B cell (primary cell): ENCODE measurements at regions of chr12 and their contacts with region 1.

Region 1: GRCh38 chr12:54701940-54702592 is 53.9 kb upstream of the DCD start:
- DNase-seq: peak; percentile 58
- ATAC-seq: no peak
- H3K4me3 ChIP-seq: no peak overlapping the region
- H3K4me3 Mint-ChIP-seq: no peak overlapping the region
- H3K27ac ChIP-seq: no peak overlapping the region
- H3K27ac Mint-ChIP-seq: no peak overlapping the region
- H3K4me1 ChIP-seq: no peaks in the 10 kb centered on the region
- H3K4me1 Mint-ChIP-seq: no peaks in the 10 kb centered on the region
- H3K27me3 ChIP-seq: no peaks in the 10 kb centered on the region
- H3K27me3 Mint-ChIP-seq: peaks cover 19% of the 10 kb centered on the region
- CTCF ChIP-seq: peak; percentile 78

Region 2: DNA sequence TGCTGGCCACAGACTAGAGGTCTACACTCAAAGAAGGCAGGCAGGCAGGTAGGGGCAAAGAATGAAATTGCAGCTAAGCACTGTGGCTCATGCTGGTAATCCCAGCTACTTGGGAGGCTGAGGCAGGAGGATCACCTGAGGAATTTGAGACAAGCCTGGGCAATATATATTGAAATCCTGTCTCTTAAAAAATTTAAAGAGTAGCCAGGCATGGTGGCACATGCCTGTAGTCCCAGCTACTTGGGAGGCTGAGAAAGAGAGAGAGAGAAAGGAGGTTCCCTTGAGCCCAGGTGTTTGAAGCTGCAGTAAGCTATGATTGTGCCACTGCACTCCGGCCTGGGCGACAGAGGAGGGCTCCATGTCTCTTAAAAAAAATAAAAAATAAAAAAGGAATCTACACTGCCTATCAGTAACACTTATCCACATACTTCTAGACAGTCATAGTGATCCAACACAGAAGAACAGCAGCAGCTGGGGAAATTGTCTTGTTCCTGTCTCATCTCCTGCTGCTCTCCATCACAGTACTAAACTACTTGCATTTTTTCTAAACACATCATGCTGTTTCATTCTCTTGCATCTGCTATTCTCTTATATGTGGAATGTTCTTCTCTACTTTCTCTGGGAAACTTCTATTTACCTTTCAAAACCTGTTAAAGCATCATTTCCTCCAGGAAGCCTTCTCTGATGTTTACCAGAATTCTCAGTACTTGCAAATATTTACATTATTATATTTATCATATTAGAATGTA is 1133.1 kb before region 1 on chr12:
- CTCF ChIA-PET with region 1: no interaction called
- POLR2A ChIA-PET with region 1: no interaction called
- intact Hi-C with region 1: no loop called
- DNase-seq: no peak
- ATAC-seq: no peak
- H3K4me3 ChIP-seq: no peak overlapping the region
- H3K4me3 Mint-ChIP-seq: no peak overlapping the region
- H3K27ac ChIP-seq: no peak overlapping the region
- H3K27ac Mint-ChIP-seq: no peak overlapping the region
- H3K4me1 ChIP-seq: peaks cover 7 to 11% of the 10 kb centered on the region in 2 donors
- H3K4me1 Mint-ChIP-seq: peaks cover 18% of the 10 kb centered on the region
- H3K27me3 ChIP-seq: no peaks in the 10 kb centered on the region
- H3K27me3 Mint-ChIP-seq: no peaks in the 10 kb centered on the region
- CTCF ChIP-seq: no peak

Region 3: DNA sequence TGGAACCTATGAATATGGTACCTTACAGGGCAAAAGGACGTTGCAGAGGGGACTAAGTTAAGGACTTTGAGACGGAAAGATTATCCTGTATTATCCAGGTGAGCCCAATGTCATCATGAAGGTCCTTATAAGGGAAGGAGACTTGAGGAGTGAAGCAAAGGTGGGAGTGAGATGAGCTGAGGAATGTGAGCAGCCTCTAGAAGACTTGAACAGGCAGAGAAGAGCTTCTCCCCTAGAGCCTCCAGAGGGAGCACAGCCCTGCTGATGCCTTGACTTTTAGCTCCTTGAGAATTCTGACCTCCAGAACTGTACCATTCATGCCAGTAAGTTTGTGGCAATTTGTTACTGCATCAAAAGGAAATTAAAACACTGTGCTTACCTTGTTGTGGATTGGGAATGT is 12.1 kb before region 1 on chr12:
- CTCF ChIA-PET with region 1: interaction called, 10 read pairs
- POLR2A ChIA-PET with region 1: no interaction called
- intact Hi-C with region 1: no loop called
- DNase-seq: no peak
- ATAC-seq: no peak
- H3K4me3 ChIP-seq: no peak overlapping the region
- H3K4me3 Mint-ChIP-seq: no peak overlapping the region
- H3K27ac ChIP-seq: no peak overlapping the region
- H3K27ac Mint-ChIP-seq: no peak overlapping the region
- H3K4me1 ChIP-seq: no peaks in the 10 kb centered on the region
- H3K4me1 Mint-ChIP-seq: no peaks in the 10 kb centered on the region
- H3K27me3 ChIP-seq: peaks cover 0 to 10% (median 9%) of the 10 kb centered on the region in 4 experiments
- H3K27me3 Mint-ChIP-seq: peaks cover 47% of the 10 kb centered on the region
- CTCF ChIP-seq: no peak

Region 4: DNA sequence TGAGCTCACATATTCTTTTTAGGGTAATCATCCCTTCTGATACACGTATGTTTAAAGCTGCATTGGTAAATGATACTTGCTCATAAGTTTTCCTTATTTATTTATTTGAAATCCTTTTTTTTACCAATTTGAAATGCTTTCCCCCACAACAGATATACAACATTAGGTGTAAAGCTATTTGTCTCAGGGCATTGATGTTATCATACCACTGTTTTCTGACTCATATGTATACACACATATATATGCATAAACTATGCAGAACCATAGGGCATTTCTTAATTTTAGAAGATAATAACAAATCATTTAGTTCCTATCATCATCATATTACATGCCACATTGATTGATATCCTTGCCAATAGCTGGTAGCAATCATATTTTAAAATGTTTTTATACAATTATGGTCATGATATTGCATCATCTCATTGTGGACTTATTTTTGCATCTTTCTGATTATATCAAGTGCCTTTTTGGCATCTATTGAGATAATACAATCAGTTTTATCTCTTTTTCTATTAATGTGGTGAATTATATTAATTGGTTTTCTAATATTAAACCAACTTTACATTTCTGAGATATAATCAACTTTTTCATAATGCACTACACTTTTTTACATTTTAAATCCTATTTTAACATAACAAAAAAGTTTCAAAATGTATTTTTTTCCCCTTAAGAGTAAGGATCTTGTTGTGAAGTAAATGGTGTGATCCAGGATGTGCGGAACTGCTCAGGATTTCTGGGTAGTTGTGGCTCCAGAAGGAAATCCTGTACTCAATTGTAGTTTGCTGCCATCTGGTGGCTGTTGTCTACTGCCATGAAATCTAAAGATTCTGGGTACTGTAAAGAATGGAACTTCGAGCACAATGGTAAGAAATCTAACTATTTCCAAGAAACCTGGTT is 440.9 kb after region 1 on chr12:
- CTCF ChIA-PET with region 1: interaction called, 9 read pairs
- POLR2A ChIA-PET with region 1: no interaction called
- intact Hi-C with region 1: loop called (anchors 1 kb)
- DNase-seq: peak; percentile 59
- ATAC-seq: no peak
- H3K4me3 ChIP-seq: no peak overlapping the region
- H3K4me3 Mint-ChIP-seq: no peak overlapping the region
- H3K27ac ChIP-seq: no peak overlapping the region
- H3K27ac Mint-ChIP-seq: no peak overlapping the region
- H3K4me1 ChIP-seq: no peaks in the 10 kb centered on the region
- H3K4me1 Mint-ChIP-seq: no peaks in the 10 kb centered on the region
- H3K27me3 ChIP-seq: no peaks in the 10 kb centered on the region
- H3K27me3 Mint-ChIP-seq: peaks cover 8% of the 10 kb centered on the region
- CTCF ChIP-seq: peak; percentile 93